ENCODE measurements at regions of chr5 and their contacts with region 1.

Region 1: GRCh38 chr5:36414869-36415282 is 113.2 kb upstream of the RANBP3L start:
- DNase-seq: no peak
- ATAC-seq: no peak
- H3K4me3 ChIP-seq: no peak overlapping the region
- H3K27ac ChIP-seq: no peak overlapping the region
- H3K4me1 ChIP-seq: no peaks in the 10 kb centered on the region
- H3K27me3 ChIP-seq: no peaks in the 10 kb centered on the region
- CTCF ChIP-seq: peak in 2 of 3 experiments; percentile 19 to 44; a peak in 3 of 6 replicates
- EP300 ChIP-seq: no peak
- POLR2A ChIP-seq: no peak
- RAD21 ChIP-seq: peak; percentile 60

Region 2: GRCh38 chr5:36168737-36169136 is 246.1 kb before region 1 on chr5:
- CTCF ChIA-PET with region 1: no interaction called
- POLR2A ChIA-PET with region 1: no interaction called
- RAD21 ChIA-PET with region 1: no interaction called
- SMC1A ChIA-PET with region 1: no interaction called
- in situ Hi-C with region 1: no loop called
- intact Hi-C with region 1: no loop called
- DNase-seq: no peak
- ATAC-seq: no peak
- H3K4me3 ChIP-seq: no peak overlapping the region
- H3K27ac ChIP-seq: no peak overlapping the region
- H3K4me1 ChIP-seq: no peaks in the 10 kb centered on the region
- H3K27me3 ChIP-seq: no peaks in the 10 kb centered on the region
- CTCF ChIP-seq: no peak
- EP300 ChIP-seq: no peak
- POLR2A ChIP-seq: no peak
- RAD21 ChIP-seq: no peak

Region 3: DNA sequence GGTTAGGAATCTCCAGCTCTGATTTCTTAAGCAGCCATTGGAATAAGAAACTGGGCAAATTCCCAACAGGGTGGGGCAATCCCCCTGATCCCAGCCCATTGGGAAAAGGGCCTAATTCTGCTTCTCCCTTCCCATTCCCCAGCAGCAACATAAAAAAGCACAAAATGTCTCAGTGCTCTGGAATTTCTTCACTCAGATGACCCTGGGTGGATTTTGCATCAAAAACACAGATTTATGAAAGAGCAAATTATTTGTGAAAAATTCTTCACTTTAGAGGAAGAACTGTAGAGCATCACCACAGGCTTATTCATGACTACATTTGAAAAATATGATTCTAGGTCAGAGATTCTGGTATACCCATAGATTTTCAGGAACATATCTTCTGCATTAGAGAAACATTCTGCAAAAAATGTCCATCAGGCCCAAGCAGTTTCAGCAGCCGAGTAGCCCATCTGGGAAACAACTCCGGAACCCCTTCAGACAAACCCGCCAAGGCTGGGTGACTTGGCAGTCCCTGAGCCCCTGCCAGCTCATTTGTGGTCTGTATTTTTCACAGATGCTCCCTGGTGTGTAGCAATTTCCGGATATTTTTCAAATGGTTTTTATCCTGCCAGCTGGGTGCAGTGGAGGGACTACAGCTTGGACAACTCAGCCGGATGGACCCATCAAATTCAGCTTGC is 11.1 kb before region 1 on chr5:
- CTCF ChIA-PET with region 1: interaction called, 13 read pairs
- POLR2A ChIA-PET with region 1: no interaction called
- RAD21 ChIA-PET with region 1: no interaction called
- SMC1A ChIA-PET with region 1: interaction called, 6 read pairs
- in situ Hi-C with region 1: no loop called
- intact Hi-C with region 1: no loop called
- DNase-seq: no peak
- ATAC-seq: no peak
- H3K4me3 ChIP-seq: no peak overlapping the region
- H3K27ac ChIP-seq: no peak overlapping the region
- H3K4me1 ChIP-seq: no peaks in the 10 kb centered on the region
- H3K27me3 ChIP-seq: peaks cover 0 to 2% of the 10 kb centered on the region in 2 experiments; a peak in 2 of 4 replicates
- CTCF ChIP-seq: no peak
- EP300 ChIP-seq: no peak
- POLR2A ChIP-seq: no peak
- RAD21 ChIP-seq: no peak

Region 4: DNA sequence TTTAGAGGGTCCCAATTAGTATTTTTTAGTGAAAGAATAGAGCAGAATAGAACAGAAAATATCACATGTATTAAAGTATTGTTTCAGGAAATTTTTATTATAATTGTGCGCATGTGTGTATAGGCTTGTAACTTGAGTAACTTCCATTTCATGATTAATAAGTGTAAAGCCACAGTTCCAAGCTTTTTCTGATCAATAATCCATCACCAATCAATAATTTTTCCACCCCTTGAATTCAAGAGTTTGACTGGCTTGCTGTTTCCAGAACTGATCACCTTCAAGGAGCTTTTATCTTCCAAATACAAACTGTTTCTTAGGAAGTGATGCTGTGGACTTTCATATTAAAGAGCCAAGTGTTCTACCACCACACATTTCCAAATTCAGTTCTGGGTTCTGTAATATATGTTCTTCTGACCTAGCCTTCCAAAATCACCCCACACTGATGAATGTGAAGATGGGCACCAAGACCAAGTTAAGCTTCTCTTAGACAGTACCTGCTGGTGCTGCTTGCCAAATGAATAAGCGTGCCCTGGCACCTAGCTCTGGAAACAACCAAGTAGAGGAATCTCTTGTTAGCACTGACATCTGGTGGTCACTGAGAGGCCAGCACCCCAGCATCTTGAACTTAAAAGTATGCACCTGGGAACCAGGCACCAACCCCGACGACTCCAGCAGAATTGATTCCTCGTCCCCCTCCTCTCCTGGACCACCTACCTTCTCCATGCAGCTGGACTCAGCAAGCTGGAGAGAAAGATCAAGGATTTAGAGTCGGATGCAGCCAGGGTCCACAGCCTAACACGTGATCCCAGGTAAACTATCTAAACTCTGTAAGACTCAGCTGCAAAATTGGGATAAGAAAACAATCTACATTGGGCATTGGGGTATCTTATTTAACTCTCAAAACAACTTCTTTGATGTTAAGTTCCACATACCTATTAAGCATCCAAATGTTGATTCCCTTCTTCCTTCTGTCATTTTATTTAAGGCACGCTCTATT is 281.1 kb after region 1 on chr5:
- CTCF ChIA-PET with region 1: interaction called, 25 read pairs
- POLR2A ChIA-PET with region 1: no interaction called
- RAD21 ChIA-PET with region 1: interaction called, 6 read pairs
- SMC1A ChIA-PET with region 1: interaction called, 10 read pairs
- in situ Hi-C with region 1: loop called (anchors 5 kb)
- intact Hi-C with region 1: loop called (anchors 1 kb)
- DNase-seq: no peak
- ATAC-seq: peak; percentile 76
- H3K4me3 ChIP-seq: no peak overlapping the region
- H3K27ac ChIP-seq: no peak overlapping the region
- H3K4me1 ChIP-seq: peaks cover 13% of the 10 kb centered on the region
- H3K27me3 ChIP-seq: no peaks in the 10 kb centered on the region
- CTCF ChIP-seq: peak; percentile 72 to 82 (median 77)
- EP300 ChIP-seq: no peak
- POLR2A ChIP-seq: no peak
- RAD21 ChIP-seq: peak; percentile 52; the same call in 1 of the 2 replicates

Region 5: DNA sequence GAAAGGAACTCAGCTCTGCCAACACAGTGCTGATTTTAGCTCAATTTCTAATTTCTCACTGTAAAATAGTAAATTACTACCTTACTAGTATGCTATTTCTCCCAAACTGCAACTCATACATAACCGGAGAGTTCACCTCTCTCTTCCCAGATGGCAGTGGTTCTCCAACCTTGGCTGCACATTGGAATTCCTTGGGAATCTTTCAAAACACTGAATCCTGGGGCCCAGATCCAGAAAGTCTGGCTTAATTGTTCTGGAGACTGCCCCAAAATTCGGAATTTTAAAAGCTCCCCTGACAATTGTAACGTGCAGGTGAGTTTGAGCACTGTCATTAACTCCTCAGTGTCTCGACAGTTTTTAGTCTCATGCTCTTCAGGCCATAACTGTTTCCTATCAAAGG is 291.8 kb after region 1 on chr5:
- CTCF ChIA-PET with region 1: no interaction called
- POLR2A ChIA-PET with region 1: no interaction called
- RAD21 ChIA-PET with region 1: no interaction called
- SMC1A ChIA-PET with region 1: no interaction called
- in situ Hi-C with region 1: no loop called
- intact Hi-C with region 1: no loop called
- DNase-seq: no peak
- ATAC-seq: no peak
- H3K4me3 ChIP-seq: no peak overlapping the region
- H3K27ac ChIP-seq: no peak overlapping the region
- H3K4me1 ChIP-seq: peaks cover 4% of the 10 kb centered on the region
- H3K27me3 ChIP-seq: no peaks in the 10 kb centered on the region
- CTCF ChIP-seq: no peak
- EP300 ChIP-seq: no peak
- POLR2A ChIP-seq: no peak
- RAD21 ChIP-seq: no peak

Measured in GM12878 (cell line).